ENCODE measurements at regions of chr15 and their contacts with region 1.

Region 1: GRCh38 chr15:69729161-69729748 is 276.6 kb downstream of the RPLP1 start:
- DNase-seq: peak; percentile 49
- ATAC-seq: no peak
- H3K4me3 Mint-ChIP-seq: no peak overlapping the region
- H3K27ac Mint-ChIP-seq: no peak overlapping the region
- H3K4me1 Mint-ChIP-seq: peaks cover 18% of the 10 kb centered on the region
- H3K27me3 Mint-ChIP-seq: peaks cover 3% of the 10 kb centered on the region
- CTCF ChIP-seq: peak; percentile 73

Region 2: DNA sequence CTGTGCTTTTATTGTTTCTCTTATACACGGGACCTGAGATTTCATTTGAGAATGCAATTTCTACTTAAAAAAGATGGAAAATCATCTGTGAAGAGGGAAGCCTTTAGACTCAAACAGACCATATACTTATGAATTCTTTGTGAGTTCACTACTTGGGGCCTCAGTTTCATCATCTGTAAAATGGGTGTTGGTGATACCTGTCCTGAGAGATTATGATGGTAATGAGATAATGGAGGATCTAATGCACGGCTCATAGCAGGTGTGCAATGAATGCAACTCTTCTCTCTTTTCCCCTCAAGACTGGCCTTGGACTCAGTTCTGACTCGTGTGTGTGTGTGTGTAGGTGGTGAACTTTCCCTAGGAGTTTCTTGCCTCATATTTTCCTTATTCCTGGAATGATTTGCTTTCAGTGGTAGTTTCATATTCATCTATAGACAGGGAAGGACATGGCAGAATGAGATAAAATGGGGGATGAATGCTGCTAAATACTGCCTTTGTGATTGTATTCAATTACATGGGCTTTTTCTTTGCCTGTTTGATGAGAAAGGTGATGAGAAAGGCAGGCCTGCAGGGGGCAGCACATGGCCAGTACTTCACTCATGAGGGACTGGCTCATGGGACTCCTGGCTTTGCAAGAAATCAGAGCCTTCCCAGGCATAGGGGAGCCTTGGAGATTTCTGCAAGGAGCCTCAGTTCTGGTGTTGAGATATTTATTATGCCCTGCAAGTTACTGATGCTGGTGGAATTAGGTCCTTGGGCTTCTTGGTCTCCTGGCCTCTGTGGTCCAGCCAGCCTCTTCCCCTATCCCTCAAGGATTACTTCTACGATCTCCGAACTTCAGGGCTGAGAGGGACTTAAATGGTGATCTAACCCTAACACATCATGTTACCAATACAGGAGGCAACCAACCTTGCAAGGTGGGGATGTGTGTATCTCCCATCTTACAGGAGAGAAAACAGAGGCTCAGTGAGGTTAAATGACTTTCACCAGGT is 205.9 kb before region 1 on chr15:
- CTCF ChIA-PET with region 1: no interaction called
- POLR2A ChIA-PET with region 1: no interaction called
- intact Hi-C with region 1: loop called (anchors 5 kb)
- DNase-seq: peak; percentile 32
- ATAC-seq: peak; percentile 42
- H3K4me3 Mint-ChIP-seq: no peak overlapping the region
- H3K27ac Mint-ChIP-seq: no peak overlapping the region
- H3K4me1 Mint-ChIP-seq: no peaks in the 10 kb centered on the region
- H3K27me3 Mint-ChIP-seq: peaks cover 12% of the 10 kb centered on the region
- CTCF ChIP-seq: no peak

Region 3: DNA sequence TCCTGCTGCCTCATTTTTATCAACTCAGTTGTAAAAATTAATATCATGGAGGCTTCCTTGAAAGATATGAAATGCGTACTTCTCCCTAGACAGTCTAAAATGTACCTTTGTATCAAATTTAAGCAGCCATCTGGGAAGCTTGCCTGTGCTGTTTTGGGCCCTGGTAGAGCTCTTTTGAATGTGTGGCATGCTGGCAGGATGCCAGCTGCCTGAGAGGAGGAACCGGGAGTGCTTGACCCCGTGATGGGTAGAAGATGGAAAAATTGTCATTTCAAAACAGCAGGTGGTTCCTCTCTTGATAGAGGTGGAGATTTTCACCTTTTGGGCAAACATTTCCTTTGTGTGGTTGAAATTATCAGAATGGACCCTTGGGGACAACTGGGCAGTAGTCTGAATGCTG is 31.3 kb before region 1 on chr15:
- CTCF ChIA-PET with region 1: no interaction called
- POLR2A ChIA-PET with region 1: no interaction called
- intact Hi-C with region 1: no loop called
- DNase-seq: no peak
- ATAC-seq: no peak
- H3K4me3 Mint-ChIP-seq: no peak overlapping the region
- H3K27ac Mint-ChIP-seq: no peak overlapping the region
- H3K4me1 Mint-ChIP-seq: peaks cover 11% of the 10 kb centered on the region
- H3K27me3 Mint-ChIP-seq: peaks cover 4% of the 10 kb centered on the region
- CTCF ChIP-seq: no peak

Region 4: GRCh38 chr15:69784798-69785566 is 55.7 kb after region 1 on chr15:
- CTCF ChIA-PET with region 1: no interaction called
- POLR2A ChIA-PET with region 1: no interaction called
- intact Hi-C with region 1: no loop called
- DNase-seq: no peak
- ATAC-seq: no peak
- H3K4me3 Mint-ChIP-seq: no peak overlapping the region
- H3K27ac Mint-ChIP-seq: no peak overlapping the region
- H3K4me1 Mint-ChIP-seq: peaks cover 12% of the 10 kb centered on the region
- H3K27me3 Mint-ChIP-seq: peaks cover 28% of the 10 kb centered on the region
- CTCF ChIP-seq: no peak

Region 5: GRCh38 chr15:69958494-69959084 is 229.3 kb after region 1 on chr15:
- CTCF ChIA-PET with region 1: no interaction called
- POLR2A ChIA-PET with region 1: no interaction called
- intact Hi-C with region 1: loop called (anchors 5 kb)
- DNase-seq: no peak
- ATAC-seq: peak; percentile 31
- H3K4me3 Mint-ChIP-seq: no peak overlapping the region
- H3K27ac Mint-ChIP-seq: no peak overlapping the region
- H3K4me1 Mint-ChIP-seq: peaks cover 7% of the 10 kb centered on the region
- H3K27me3 Mint-ChIP-seq: peaks cover 11% of the 10 kb centered on the region
- CTCF ChIP-seq: no peak

Region 6: GRCh38 chr15:70362886-70363285 is 633.6 kb after region 1 on chr15:
- CTCF ChIA-PET with region 1: no interaction called
- POLR2A ChIA-PET with region 1: no interaction called
- intact Hi-C with region 1: loop called (anchors 2 kb)
- DNase-seq: no peak
- ATAC-seq: no peak
- H3K4me3 Mint-ChIP-seq: no peak overlapping the region
- H3K27ac Mint-ChIP-seq: no peak overlapping the region
- H3K4me1 Mint-ChIP-seq: peaks cover 13% of the 10 kb centered on the region
- H3K27me3 Mint-ChIP-seq: no peaks in the 10 kb centered on the region
- CTCF ChIP-seq: no peak

Region 7: DNA sequence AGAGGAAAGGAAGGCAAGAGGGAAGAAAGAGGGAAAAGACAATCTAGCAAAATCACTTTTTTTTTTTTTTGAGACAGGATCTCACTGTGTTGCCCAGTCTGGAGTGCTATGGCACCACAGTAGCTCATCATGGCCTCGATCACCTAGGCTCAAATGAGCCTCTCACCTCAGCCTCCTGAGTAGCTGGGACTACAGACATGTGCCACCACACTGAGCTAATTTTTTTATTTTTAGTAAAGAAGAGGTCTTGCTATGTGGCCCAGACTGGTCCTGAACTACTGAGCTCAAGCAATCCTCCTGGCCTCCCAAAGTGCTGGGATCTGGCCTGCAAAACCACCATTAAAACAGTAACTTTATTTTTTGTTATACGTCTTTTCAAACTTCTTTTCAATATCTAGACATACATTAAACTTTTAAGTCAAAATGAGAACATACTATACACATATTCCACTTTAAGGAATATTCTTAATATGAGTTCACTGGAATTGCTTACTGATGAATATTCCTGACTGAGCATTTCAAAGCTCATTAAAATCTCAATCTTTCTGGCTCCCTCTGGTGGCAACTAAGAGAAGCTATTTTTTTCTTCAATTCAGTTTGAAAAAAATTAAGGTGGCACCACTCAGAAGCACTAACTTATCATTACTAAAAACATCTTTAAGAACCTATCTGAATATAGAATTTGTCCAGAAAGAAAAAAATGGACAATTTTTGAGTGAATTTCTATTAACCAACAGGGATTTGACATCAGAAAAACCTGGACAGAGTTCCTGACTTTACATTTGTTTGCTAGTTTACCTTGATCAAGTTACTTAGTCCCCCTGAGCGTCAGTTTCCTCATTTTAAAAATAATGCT is 993.2 kb after region 1 on chr15:
- CTCF ChIA-PET with region 1: interaction called, 3 read pairs
- POLR2A ChIA-PET with region 1: no interaction called
- intact Hi-C with region 1: loop called (anchors 10 kb)
- DNase-seq: no peak
- ATAC-seq: no peak
- H3K4me3 Mint-ChIP-seq: no peak overlapping the region
- H3K27ac Mint-ChIP-seq: no peak overlapping the region
- H3K4me1 Mint-ChIP-seq: no peaks in the 10 kb centered on the region
- H3K27me3 Mint-ChIP-seq: peaks cover 9% of the 10 kb centered on the region
- CTCF ChIP-seq: peak; percentile 53